GM12878 (cell line): ENCODE measurements at regions of chr18 and their contacts with region 1.

Region 1: DNA sequence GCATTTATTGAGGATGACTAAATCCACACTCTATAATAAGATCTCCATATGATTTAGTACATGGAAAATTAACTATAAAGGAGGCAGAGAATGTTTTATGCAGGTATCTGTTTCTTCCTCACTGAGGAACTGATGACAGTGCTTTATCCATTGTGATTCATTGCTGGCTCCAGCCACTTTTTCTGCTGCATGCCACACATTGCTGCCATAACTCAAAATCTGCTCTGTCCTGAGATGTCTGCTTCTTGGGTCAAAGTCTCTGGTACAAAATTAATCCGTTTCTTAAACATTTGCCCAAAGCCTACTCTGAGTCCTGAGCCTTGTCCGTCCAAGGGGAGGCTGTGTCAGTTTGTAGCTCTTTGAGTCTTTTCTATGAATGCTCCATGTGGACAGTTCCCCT is 15.5 kb upstream of the ARHGAP28 start:
- DNase-seq: no peak
- ATAC-seq: no peak
- H3K4me3 ChIP-seq: no peak overlapping the region
- H3K27ac ChIP-seq: no peak overlapping the region
- H3K4me1 ChIP-seq: no peaks in the 10 kb centered on the region
- H3K27me3 ChIP-seq: no peaks in the 10 kb centered on the region
- CTCF ChIP-seq: no peak
- EP300 ChIP-seq: no peak
- POLR2A ChIP-seq: no peak
- RAD21 ChIP-seq: no peak

Region 2: DNA sequence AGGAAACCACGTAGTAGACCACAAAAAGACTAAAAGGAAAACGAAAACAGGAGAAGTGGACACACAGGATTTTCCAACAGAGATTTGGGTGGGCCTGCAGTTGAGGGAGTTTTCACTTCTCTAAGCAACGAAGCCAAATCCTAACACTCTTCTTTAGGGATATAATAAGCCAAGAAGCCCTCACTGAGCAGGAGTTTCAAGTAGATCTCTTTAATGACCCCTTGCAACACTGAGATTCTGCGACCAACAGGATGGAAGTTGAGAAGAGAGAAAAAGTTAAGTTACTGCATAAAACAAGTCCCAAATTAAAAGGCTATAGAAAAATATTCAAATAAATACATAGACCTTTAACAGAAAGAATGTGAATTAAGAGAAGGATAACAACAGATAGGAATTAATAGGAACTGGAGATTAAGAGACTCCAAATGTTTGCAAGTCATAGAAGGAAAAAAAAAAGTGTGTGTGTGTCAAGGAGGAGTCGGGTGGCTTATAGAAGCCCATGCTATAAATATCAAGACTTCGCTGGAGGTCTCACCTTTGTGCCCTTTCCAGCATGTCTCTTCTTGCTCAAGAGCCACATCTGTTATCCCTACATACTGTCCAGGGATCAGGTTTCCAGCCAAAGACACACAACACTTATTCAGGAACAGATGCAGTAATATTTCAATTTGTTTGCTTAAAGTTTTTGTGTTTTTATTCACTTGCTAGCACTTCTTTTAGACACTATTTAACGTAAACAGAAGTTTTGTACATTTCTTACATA is 53.9 kb before region 1 on chr18:
- CTCF ChIA-PET with region 1: no interaction called
- POLR2A ChIA-PET with region 1: no interaction called
- RAD21 ChIA-PET with region 1: no interaction called
- SMC1A ChIA-PET with region 1: no interaction called
- in situ Hi-C with region 1: no loop called
- intact Hi-C with region 1: loop called (anchors 10 kb)
- DNase-seq: no peak
- ATAC-seq: no peak
- H3K4me3 ChIP-seq: no peak overlapping the region
- H3K27ac ChIP-seq: no peak overlapping the region
- H3K4me1 ChIP-seq: no peaks in the 10 kb centered on the region
- H3K27me3 ChIP-seq: no peaks in the 10 kb centered on the region
- CTCF ChIP-seq: no peak
- EP300 ChIP-seq: no peak
- POLR2A ChIP-seq: no peak
- RAD21 ChIP-seq: no peak

Region 3: GRCh38 chr18:7617738-7618422 is 903.9 kb after region 1 on chr18:
- CTCF ChIA-PET with region 1: no interaction called
- POLR2A ChIA-PET with region 1: no interaction called
- RAD21 ChIA-PET with region 1: no interaction called
- SMC1A ChIA-PET with region 1: no interaction called
- in situ Hi-C with region 1: no loop called
- intact Hi-C with region 1: no loop called
- DNase-seq: no peak
- ATAC-seq: no peak
- H3K4me3 ChIP-seq: no peak overlapping the region
- H3K27ac ChIP-seq: no peak overlapping the region
- H3K4me1 ChIP-seq: no peaks in the 10 kb centered on the region
- H3K27me3 ChIP-seq: no peaks in the 10 kb centered on the region
- CTCF ChIP-seq: no peak
- EP300 ChIP-seq: no peak
- POLR2A ChIP-seq: no peak
- RAD21 ChIP-seq: no peak